ENCODE measurements at regions of chr14 and their contacts with region 1.

Region 1: DNA sequence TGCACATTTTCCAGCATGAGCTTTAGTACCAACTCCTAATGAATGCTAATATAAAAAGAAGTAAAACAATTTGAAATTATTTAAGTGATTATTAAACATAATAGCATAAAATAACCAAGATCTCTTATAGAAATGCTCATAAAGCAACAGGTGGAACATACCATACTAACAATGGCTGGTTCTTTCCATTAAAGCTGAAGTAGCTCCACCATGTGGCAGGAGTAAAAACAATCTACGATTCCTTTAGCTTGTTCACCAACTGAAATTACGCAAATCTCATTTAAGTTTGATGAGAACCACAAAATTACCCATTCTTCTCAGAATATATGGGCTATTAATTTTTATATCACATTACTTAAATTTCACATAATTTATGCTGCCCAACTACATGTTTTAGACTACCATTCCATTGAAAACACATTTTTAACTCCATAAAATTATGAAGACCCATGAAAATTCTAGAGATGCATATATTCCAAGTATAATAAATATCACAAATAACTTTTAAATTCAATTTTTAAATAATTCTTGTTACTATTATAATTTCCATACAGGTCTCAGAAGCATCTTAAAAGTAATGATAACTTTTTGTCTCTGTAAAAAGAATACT is 213.6 kb downstream of the DAD1 start:
- DNase-seq: peak in 14 of 42 donors; percentile 29 to 78 (median 46)

Region 2: DNA sequence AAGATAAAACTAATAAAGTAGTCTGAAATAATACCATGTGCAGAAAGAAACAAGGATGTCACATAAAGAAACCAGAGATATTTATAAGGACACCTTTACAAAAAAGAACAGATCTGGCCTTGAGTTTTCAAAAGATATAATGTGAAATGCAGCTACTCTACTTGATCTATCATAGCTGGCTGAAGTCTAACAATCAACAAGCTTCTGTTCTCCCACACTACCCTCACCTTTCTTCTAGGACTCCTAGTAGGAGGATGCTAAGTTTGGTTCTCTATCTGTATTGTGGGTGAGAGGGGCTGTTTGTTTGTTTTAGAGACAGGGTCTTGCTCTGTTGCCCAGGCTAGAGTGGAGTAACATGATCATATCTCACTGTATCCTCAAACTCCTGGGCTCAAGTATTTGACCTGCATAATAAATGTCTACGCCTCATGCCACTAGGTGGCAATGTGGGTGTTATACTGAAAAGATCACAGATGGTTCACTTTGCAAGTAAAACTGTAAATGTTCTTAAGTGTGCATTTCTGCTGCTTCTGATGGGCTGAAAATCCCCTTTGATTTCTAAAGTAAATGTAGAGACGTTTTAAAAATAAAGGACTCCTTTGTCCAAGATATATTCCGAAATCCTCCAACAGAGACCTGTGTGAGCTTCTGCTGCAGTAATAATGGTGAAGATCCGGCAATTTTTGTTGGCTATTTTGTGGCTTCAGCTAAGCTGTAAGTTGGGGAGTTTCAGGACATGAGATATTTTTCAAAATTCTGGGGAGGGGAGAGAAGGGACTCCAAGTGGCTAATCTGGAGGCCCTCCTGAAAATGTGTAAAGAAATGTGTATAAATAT is 55.7 kb before region 1 on chr14:
- intact Hi-C with region 1: loop called (anchors 5 kb)
- DNase-seq: peak in 39 of 42 donors; percentile 18 to 91 (median 67)